Endothelial cell of umbilical vein (primary cell): ENCODE measurements at regions of chr1 and their contacts with region 1.

Region 1: GRCh38 chr1:15128520-15129313 is 24.8 kb upstream of the TMEM51 start:
- DNase-seq: peak; percentile 78
- H3K4me3 ChIP-seq: no peak overlapping the region
- H3K27ac ChIP-seq: no peak overlapping the region
- H3K4me1 ChIP-seq: no peaks in the 10 kb centered on the region
- H3K27me3 ChIP-seq: no peaks in the 10 kb centered on the region
- CTCF ChIP-seq: peak; percentile 92
- POLR2A ChIP-seq: no peak

Region 2: GRCh38 chr1:15083578-15083977 is 45.1 kb before region 1 on chr1:
- CTCF ChIA-PET with region 1: no interaction called
- POLR2A ChIA-PET with region 1: no interaction called
- dilution Hi-C with region 1: no loop called
- intact Hi-C with region 1: no loop called
- DNase-seq: no peak
- H3K4me3 ChIP-seq: no peak overlapping the region
- H3K27ac ChIP-seq: no peak overlapping the region
- H3K4me1 ChIP-seq: no peaks in the 10 kb centered on the region
- H3K27me3 ChIP-seq: no peaks in the 10 kb centered on the region
- CTCF ChIP-seq: no peak
- POLR2A ChIP-seq: no peak

Region 3: DNA sequence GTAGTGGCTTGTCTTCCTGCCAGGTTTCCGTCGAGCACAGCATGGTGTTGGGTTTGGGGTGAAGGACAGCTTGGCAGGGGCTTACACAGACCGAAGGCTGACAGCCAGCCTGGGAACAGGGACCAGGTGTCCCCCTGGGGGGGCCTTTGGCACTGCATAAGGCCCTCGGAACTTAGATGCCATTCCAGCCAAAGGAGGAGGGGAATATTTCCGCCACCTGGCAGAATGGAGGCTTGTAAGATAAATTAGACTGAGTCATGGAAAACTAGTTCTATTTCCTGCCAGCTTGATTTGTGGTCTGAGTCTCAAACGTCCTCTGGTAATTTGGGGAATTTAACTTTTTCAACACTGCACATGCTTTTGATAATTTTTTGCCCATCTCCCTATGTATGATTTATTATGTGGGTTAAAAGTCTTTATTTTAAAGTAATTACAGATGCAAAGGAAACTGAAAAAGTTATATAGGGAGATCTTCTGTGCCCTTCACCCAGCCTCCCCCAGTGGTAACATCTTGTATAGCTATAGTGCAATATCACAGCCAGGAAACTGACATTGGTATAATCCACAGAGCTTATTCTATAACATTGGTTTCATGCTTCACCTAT is 13.3 kb after region 1 on chr1:
- CTCF ChIA-PET with region 1: interaction called, 17 read pairs
- POLR2A ChIA-PET with region 1: no interaction called
- dilution Hi-C with region 1: no loop called
- intact Hi-C with region 1: no loop called
- DNase-seq: peak; percentile 31
- H3K4me3 ChIP-seq: no peak overlapping the region
- H3K27ac ChIP-seq: no peak overlapping the region
- H3K4me1 ChIP-seq: no peaks in the 10 kb centered on the region
- H3K27me3 ChIP-seq: peaks cover 0 to 2% of the 10 kb centered on the region in 2 experiments
- CTCF ChIP-seq: no peak
- POLR2A ChIP-seq: no peak

Region 4: GRCh38 chr1:15201849-15202551 is 73.3 kb after region 1 on chr1:
- CTCF ChIA-PET with region 1: interaction called, 10 read pairs
- POLR2A ChIA-PET with region 1: interaction called, 6 read pairs
- dilution Hi-C with region 1: no loop called
- intact Hi-C with region 1: no loop called
- DNase-seq: no peak
- H3K4me3 ChIP-seq: no peak overlapping the region
- H3K27ac ChIP-seq: no peak overlapping the region
- H3K4me1 ChIP-seq: peaks cover 14% of the 10 kb centered on the region
- H3K27me3 ChIP-seq: no peaks in the 10 kb centered on the region
- CTCF ChIP-seq: no peak
- POLR2A ChIP-seq: no peak

Region 5: GRCh38 chr1:15272009-15272788 is 143.5 kb after region 1 on chr1:
- CTCF ChIA-PET with region 1: interaction called, 187 read pairs
- POLR2A ChIA-PET with region 1: interaction called, 4 read pairs
- dilution Hi-C with region 1: no loop called
- intact Hi-C with region 1: loop called (anchors 1 kb)
- DNase-seq: peak; percentile 72
- H3K4me3 ChIP-seq: no peak overlapping the region
- H3K27ac ChIP-seq: no peak overlapping the region
- H3K4me1 ChIP-seq: no peaks in the 10 kb centered on the region
- H3K27me3 ChIP-seq: no peaks in the 10 kb centered on the region
- CTCF ChIP-seq: peak; percentile 76 to 79
- POLR2A ChIP-seq: no peak

Region 6: DNA sequence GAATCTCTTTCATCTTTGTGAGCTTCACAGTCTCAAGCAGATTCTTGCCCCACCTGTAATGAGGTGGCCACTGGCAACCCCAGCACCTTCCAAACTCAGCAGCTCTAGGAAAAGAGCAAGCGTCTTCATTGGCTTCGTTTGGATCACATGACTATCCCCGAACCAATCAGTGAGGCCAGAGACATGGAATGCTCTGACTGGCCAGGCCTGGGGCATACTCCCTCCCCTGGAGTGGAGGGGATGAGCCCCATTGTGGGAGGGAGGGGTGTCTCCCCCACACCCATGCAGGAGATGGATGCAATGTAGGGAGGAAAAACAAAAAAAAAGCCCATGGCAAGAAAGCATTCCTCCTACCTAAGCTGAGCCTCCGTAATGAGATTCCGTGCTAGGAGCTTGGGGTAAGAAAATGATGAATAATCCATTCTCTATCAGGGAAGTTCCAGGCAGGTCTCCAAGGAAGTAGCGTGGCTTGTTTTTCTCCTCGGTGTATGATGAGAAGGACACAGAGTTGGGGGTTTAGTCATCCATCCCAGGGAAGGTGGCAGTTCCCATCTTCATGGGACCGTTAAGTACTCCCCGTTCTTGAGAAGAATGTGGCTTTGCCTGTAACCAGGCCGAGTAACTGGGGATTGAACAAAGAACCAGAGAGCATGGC is 151.0 kb after region 1 on chr1:
- CTCF ChIA-PET with region 1: interaction called, 187 read pairs
- POLR2A ChIA-PET with region 1: no interaction called
- dilution Hi-C with region 1: no loop called
- intact Hi-C with region 1: no loop called
- DNase-seq: no peak
- H3K4me3 ChIP-seq: no peak overlapping the region
- H3K27ac ChIP-seq: no peak overlapping the region
- H3K4me1 ChIP-seq: no peaks in the 10 kb centered on the region
- H3K27me3 ChIP-seq: peaks cover 0 to 2% of the 10 kb centered on the region in 2 experiments
- CTCF ChIP-seq: no peak
- POLR2A ChIP-seq: no peak

Region 7: DNA sequence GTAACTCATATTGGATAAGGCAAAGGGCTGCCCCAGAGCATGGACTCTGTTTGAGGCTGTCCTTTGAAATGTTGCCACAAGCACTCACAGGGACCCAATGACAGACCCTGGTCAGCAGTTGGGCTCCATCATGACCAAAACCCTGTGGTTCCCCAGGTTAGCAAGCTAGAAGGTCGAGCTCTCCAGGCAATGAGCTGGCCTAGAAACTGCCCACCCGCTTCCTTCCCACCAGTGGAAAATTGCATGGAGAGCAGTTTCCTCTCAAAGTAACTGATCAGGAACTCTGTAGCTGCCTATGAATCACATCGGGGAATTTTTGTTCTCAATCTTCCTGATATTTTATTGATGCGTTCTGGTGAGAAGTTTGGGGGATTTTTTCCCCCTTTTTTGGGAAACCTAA is 171.1 kb after region 1 on chr1:
- CTCF ChIA-PET with region 1: interaction called, 126 read pairs
- POLR2A ChIA-PET with region 1: no interaction called
- dilution Hi-C with region 1: no loop called
- intact Hi-C with region 1: loop called (anchors 1 kb)
- DNase-seq: peak; percentile 13
- H3K4me3 ChIP-seq: no peak overlapping the region
- H3K27ac ChIP-seq: no peak overlapping the region
- H3K4me1 ChIP-seq: no peaks in the 10 kb centered on the region
- H3K27me3 ChIP-seq: peaks cover 0 to 2% of the 10 kb centered on the region in 2 experiments
- CTCF ChIP-seq: no peak
- POLR2A ChIP-seq: no peak

Region 8: GRCh38 chr1:15304701-15305467 is 176.2 kb after region 1 on chr1:
- CTCF ChIA-PET with region 1: interaction called, 126 read pairs
- POLR2A ChIA-PET with region 1: no interaction called
- dilution Hi-C with region 1: no loop called
- intact Hi-C with region 1: loop called (anchors 1 kb)
- DNase-seq: peak; percentile 49
- H3K4me3 ChIP-seq: no peak overlapping the region
- H3K27ac ChIP-seq: no peak overlapping the region
- H3K4me1 ChIP-seq: no peaks in the 10 kb centered on the region
- H3K27me3 ChIP-seq: no peaks in the 10 kb centered on the region
- CTCF ChIP-seq: peak; percentile 85 to 87
- POLR2A ChIP-seq: no peak

Region 9: GRCh38 chr1:15390667-15391066 is 261.9 kb after region 1 on chr1:
- CTCF ChIA-PET with region 1: no interaction called
- POLR2A ChIA-PET with region 1: no interaction called
- dilution Hi-C with region 1: no loop called
- intact Hi-C with region 1: no loop called
- DNase-seq: no peak
- H3K4me3 ChIP-seq: no peak overlapping the region
- H3K27ac ChIP-seq: no peak overlapping the region
- H3K4me1 ChIP-seq: no peaks in the 10 kb centered on the region
- H3K27me3 ChIP-seq: peaks cover 0 to 3% of the 10 kb centered on the region in 2 experiments
- CTCF ChIP-seq: no peak
- POLR2A ChIP-seq: no peak